Left lung (tissue), 14 donors: ENCODE measurements at regions of chr15 and their contacts with region 1.

Region 1: DNA sequence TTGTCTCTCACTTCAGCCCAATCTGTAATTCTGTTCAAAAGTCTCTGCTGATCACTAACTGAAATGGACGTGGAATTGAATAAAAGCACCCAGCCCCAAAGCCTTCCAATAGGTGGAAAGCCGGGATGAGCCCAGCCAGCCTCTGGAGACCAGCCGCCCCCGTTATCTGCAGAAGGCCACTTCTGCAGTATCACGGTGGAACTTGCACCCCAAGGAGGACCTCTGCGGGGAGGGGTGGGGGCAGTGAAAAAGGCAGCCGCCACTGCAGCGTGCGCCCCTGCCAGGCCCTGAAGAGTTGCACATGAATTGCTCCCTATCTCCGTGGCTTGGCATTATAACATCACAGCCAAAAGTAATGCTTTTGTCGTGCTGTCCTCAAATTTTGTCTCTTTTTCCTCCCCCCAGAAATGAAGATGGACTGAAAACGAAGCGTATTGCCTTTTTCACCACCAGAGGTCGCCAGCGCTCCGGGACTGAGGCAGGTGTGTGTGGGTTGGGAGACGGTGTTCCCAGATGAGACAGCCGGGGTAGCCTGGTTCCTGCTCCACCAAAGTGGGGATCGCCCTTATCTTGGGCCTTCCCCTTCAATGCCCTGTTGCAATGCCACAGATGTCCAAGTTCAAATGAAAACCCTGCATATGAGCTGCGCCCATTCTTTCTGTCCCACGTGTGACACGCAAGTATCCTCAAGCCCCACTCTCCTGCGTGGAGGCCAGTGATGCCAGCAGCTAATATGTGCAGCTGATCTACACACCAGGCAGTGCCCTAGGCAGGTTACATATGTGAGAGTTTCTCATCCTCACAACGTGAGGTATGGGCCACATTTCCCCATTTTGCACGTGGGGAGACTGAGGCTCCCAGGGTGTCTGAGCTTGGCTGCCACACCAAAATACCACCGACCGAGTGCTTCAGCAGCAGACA is 96.0 kb downstream of the LRRK1 start:
- DNase-seq: peak; percentile 70 to 91 (median 76)
- ATAC-seq: peak; percentile 81
- H3K4me3 ChIP-seq: no peak overlapping the region
- H3K27ac ChIP-seq: no peak overlapping the region
- H3K4me1 ChIP-seq: peaks cover 9 to 19% of the 10 kb centered on the region in 2 donors
- H3K27me3 ChIP-seq: no peaks in the 10 kb centered on the region
- CTCF ChIP-seq: peak; percentile 81 to 83

Region 2: GRCh38 chr15:100889385-100890050 is 125.7 kb before region 1 on chr15:
- intact Hi-C with region 1: no loop called
- DNase-seq: peak in 2 of 4 donors; percentile 51 to 76
- ATAC-seq: peak; percentile 80
- H3K4me3 ChIP-seq: no peak overlapping the region
- H3K27ac ChIP-seq: no peak overlapping the region
- H3K4me1 ChIP-seq: peaks cover 0 to 5% of the 10 kb centered on the region in 2 donors
- H3K27me3 ChIP-seq: peaks cover 0 to 98% of the 10 kb centered on the region in 2 donors
- CTCF ChIP-seq: no peak

Region 3: GRCh38 chr15:101251830-101252820 is 236.9 kb after region 1 on chr15 and contains the start of gene CHSY1:
- intact Hi-C with region 1: loop called (anchors 2 to 10 kb)
- DNase-seq: peak; percentile 93 to 96 (median 95)
- ATAC-seq: peak; percentile 83
- H3K4me3 ChIP-seq: peak within 1 kb of the TSS; percentile 61 to 89
- H3K27ac ChIP-seq: peak within 1 kb of the TSS; percentile 84 to 92
- H3K4me1 ChIP-seq: peaks cover 14 to 54% of the 10 kb centered on the region in 2 donors
- H3K27me3 ChIP-seq: no peaks in the 10 kb centered on the region
- CTCF ChIP-seq: no peak
- polyA plus RNA-seq, gene CHSY1: 49.8 to 61.5 (median 53.1) TPM

Region 4: DNA sequence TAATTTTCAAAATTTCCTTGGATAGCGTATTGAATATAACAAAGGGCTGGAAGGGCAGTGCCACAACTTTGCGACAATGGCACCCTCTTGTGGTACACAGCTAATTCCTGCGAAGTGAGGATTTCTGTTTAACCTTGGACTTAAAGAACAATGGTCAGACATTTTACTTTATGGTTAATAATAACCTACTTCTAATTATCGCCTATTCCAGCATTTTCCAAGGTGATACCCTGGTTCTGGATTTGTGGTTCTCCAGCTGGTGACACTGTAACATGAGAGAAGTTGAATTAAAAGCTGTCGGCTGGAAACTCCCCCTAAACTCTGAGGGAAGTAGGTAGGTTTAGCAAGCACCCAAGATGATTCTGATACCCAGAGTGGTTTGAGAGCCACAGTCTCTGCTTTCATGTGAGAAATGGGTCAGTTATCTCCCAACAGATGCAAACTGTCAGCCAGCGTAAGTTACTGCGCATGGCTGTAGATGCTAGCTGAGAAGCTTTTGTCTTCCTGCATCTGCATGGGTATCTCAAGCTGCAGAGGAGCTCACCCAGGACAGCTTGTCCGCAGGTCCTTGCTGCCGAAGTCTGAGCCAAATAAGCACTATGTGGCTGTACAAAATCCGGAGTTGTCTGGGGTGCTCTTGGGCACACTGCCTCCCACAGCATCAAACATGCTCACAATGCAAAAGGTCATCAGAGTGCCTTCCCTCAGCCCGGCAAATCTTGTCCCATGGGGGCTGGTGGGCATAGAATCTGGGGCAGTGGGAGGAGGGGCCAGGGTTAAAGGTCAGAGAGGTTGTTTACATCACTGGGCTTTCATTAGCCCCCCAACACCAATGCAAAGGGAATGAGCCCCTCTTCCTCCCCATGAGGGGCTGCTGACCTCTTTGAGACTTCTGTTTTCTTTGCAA is 243.3 kb after region 1 on chr15:
- intact Hi-C with region 1: loop called (anchors 2 to 10 kb)
- DNase-seq: peak in 2 of 4 donors; percentile 62 to 84
- ATAC-seq: peak; percentile 88
- H3K4me3 ChIP-seq: no peak overlapping the region
- H3K27ac ChIP-seq: no peak overlapping the region
- H3K4me1 ChIP-seq: peaks cover 0 to 12% of the 10 kb centered on the region in 2 donors
- H3K27me3 ChIP-seq: no peaks in the 10 kb centered on the region
- CTCF ChIP-seq: peak; percentile 77 to 78